Motor neuron (in vitro differentiated cells): ENCODE measurements at regions of chr3 and their contacts with region 1.

Region 1: GRCh38 chr3:179015551-179016020 is 56.0 kb downstream of the ZMAT3 start:
- ATAC-seq: peak; percentile 54 to 90 (median 72)
- H3K4me3 ChIP-seq: no peak overlapping the region
- H3K27ac ChIP-seq: no peak overlapping the region
- H3K4me1 ChIP-seq: peaks cover 0 to 4% of the 10 kb centered on the region in 2 donors

Region 2: GRCh38 chr3:179309225-179310078 is 293.9 kb after region 1 on chr3:
- in situ Hi-C with region 1: loop called in 7 of 9 experiments (anchors 10 to 25 kb)
- ATAC-seq: peak in 4 of 8 experiments; percentile 50 to 93 (median 61)
- H3K4me3 ChIP-seq: no peak overlapping the region
- H3K27ac ChIP-seq: no peak overlapping the region
- H3K4me1 ChIP-seq: peaks cover 0 to 9% of the 10 kb centered on the region in 2 donors